ENCODE measurements at regions of chr3 and their contacts with region 1.

Region 1: DNA sequence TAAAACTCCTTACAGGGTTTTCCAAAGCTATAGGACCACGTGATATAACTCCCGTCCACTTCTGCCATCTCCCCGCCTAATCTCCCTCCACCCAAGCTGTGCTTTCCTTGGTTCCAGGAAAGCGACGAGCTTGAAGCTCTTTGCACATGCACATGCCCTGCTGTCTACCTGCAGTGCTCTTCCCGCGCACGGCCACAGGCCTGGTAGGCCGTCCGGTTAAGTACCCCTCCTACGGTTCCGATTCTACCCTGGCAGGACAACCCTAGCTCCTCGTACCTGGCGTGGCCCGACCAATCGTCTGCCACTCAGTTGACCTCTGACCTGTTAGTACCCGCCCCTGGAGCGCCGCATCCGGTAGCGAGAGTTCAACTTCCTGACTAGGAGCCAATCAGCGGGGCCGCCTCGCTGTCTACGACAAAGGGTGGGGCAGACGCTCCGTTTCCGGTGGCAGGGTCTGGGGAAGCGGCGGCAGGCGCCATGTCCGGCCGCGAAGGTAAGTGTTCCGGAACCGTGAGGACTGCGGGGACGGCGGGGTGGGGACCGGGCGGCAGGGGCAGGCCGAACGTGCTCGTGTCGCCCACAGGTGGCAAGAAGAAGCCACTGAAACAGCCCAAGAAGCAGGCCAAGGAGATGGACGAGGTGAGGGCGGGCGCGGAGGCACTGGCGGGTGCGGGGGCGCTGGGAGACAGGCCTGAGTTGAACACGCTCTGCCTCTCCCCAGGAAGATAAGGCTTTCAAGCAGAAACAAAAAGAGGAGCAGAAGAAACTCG is at the starts of genes CCDC51 and TMA7:
- DNase-seq: peak; percentile 87
- H3K4me3 ChIP-seq: peak within 1 kb of the TSS; percentile 89
- CTCF ChIP-seq: no peak

Region 2: GRCh38 chr3:48273594-48274211 is 166.3 kb before region 1 on chr3:
- in situ Hi-C with region 1: loop called (anchors 25 kb)
- DNase-seq: peak; percentile 32
- H3K4me3 ChIP-seq: no peak overlapping the region
- CTCF ChIP-seq: peak; percentile 84

Region 3: DNA sequence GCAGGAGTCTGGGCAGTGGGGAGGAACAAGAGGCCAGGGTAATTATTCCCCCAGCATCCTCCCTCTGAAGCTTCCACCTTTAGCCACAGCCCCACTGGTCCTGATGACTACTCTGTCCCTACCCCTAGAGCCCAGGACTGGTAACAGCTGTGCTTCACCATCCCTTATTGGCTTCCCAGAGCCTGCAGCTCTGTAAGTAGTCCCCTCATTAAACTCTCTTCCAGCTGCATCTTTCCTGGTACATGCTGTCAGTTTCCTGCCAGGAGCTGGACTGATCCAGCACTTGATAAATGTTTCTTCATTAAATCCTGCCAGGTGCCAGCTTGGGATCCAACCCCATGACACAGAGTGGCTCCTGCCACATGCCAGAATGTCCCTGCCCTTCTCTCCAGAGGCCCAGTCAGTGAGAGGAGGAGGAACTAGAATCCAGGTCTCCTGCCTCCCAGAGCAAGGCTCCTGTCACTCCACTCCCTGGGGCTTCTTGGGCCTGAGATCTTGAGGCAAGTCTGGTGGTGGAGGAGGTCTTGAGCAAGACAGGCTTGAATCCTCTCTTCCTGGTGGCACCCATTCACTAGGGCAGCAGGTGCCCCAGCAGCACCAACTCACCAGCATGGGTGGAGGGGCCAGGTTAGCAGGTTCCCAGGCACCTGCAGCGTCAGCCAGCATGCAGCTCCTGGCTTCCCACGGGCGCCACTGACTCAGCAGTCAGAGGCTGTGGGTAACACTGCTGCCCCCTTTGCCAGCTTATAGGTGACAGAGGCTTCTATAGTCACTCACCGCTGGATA is 40.4 kb before region 1 on chr3:
- in situ Hi-C with region 1: loop called (anchors 5 kb)
- DNase-seq: no peak
- H3K4me3 ChIP-seq: no peak overlapping the region
- CTCF ChIP-seq: no peak

Region 4: GRCh38 chr3:48507351-48508061 is 67.5 kb after region 1 on chr3:
- in situ Hi-C with region 1: no loop called
- DNase-seq: peak; percentile 63
- H3K4me3 ChIP-seq: no peak overlapping the region
- CTCF ChIP-seq: peak; percentile 67

Region 5: DNA sequence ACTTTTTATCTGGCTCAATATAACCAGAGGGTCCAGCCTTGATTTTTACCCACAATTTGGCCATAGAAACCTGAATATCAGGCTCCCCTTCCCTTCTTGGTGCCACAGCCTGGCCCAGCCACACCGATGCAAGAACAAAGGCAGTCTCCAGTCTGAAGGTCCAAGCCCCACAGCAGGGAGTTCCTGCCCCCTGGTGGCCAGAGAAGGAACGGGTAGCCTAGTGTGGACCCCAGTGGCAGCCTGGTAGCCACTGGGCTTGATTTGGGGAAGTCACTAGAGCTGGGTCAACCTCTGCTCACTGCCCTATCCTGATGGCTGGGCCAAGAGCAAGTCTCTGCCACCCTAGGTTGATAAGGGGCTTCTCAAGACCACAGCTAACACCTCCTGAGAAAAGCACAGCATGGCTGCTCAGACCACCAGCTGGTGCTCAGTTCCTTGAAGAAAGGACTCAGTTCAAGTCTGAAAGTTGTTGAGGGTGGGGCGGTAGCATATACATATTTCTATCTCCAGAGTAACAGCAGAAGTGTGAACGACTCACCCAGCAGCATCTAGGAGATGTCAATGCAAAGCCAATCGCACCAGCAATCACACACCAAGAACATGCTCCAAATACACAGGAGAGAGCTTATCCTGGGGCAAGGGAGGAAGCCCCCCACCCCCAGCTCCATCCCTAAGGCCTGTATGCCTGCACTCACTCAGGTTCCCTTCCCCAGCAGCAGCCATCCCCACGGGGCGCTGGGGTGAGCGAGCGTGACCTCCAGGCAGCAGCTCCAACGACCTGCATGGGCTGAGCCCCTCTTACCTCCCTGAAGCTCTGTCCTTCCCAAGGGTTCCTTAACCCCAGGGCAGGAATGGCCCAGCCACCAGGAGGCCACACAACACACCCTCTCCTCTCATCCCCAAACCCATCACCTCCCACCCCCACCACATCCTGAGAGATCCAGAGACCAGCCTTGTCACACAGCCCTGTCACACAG is 109.0 kb after region 1 on chr3:
- in situ Hi-C with region 1: no loop called
- DNase-seq: peak; percentile 51
- H3K4me3 ChIP-seq: no peak overlapping the region
- CTCF ChIP-seq: peak; percentile 94

Region 6: DNA sequence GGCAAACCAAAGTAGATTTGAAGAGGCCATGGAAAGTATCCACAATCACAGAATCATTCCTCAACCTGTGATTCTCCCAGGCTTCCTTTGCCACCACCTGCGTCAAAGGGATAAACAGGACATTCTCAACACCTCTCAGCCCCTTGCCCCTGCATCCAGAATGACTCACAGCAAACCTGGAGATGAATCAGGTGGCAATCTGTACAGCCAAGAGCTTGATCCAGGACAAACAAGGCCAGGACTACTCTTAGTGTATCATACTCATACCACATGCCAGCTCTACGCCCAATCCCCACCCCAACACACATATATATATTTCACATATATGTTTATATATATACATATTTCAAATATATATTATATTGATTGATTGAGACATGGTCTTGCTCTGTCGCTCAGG is 860.6 kb after region 1 on chr3:
- in situ Hi-C with region 1: no loop called
- DNase-seq: no peak
- H3K4me3 ChIP-seq: no peak overlapping the region
- CTCF ChIP-seq: no peak

Measured in astrocyte of the cerebellum (primary cell).